Calu3 (cell line): ENCODE measurements at regions of chrX and their contacts with region 1.

Region 1: DNA sequence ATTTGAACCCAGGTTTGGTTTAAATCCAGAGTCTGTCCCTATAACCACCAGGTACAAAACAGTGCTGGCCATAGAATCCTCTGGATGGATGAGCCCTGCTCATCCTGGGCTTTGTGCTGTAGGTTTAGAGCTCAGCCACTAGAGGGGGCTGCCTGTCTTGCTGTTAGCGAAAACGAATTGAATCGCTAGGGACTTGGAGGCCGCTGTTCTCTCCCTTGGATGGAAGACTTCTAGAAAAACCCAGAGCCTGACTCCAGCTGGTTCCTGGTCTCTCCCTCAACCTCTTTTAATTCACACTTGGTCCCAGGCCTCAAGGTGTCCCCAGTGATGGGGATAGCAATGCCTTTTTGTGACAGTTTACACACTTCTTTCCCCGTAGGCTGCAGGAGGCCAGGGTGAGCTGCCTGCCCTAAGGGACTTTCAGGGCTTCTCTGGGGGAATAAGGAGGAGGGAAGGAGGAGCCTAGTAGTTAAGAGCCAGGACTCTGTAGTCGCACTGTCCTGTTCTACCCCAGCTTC is 8.7 kb downstream of the RIPPLY1 start:
- DNase-seq: peak; percentile 75
- H3K4me3 Mint-ChIP-seq: no peak overlapping the region
- H3K27ac Mint-ChIP-seq: no peak overlapping the region
- H3K4me1 Mint-ChIP-seq: peaks cover 46% of the 10 kb centered on the region
- H3K27me3 Mint-ChIP-seq: no peaks in the 10 kb centered on the region
- CTCF ChIP-seq: peak; percentile 74

Region 2: GRCh38 chrX:105781804-105782203 is 1112.6 kb before region 1 on chrX:
- CTCF ChIA-PET with region 1: no interaction called
- intact Hi-C with region 1: no loop called
- DNase-seq: no peak
- H3K4me3 Mint-ChIP-seq: no peak overlapping the region
- H3K27ac Mint-ChIP-seq: no peak overlapping the region
- H3K4me1 Mint-ChIP-seq: no peaks in the 10 kb centered on the region
- H3K27me3 Mint-ChIP-seq: no peaks in the 10 kb centered on the region
- CTCF ChIP-seq: no peak

Region 3: GRCh38 chrX:106170318-106170717 is 724.1 kb before region 1 on chrX:
- CTCF ChIA-PET with region 1: no interaction called
- intact Hi-C with region 1: no loop called
- DNase-seq: peak; percentile 12
- H3K4me3 Mint-ChIP-seq: no peak overlapping the region
- H3K27ac Mint-ChIP-seq: no peak overlapping the region
- H3K4me1 Mint-ChIP-seq: peaks cover 8% of the 10 kb centered on the region
- H3K27me3 Mint-ChIP-seq: peaks cover 15% of the 10 kb centered on the region
- CTCF ChIP-seq: peak; percentile 35

Region 4: GRCh38 chrX:106933041-106933961 is 38.9 kb after region 1 on chrX:
- CTCF ChIA-PET with region 1: interaction called, 9 read pairs
- intact Hi-C with region 1: loop called (anchors 2 kb)
- DNase-seq: peak; percentile 36
- H3K4me3 Mint-ChIP-seq: peak overlapping the region; percentile 39
- H3K27ac Mint-ChIP-seq: peak overlapping the region; percentile 88
- H3K4me1 Mint-ChIP-seq: peaks cover 44% of the 10 kb centered on the region
- H3K27me3 Mint-ChIP-seq: no peaks in the 10 kb centered on the region
- CTCF ChIP-seq: no peak

Region 5: DNA sequence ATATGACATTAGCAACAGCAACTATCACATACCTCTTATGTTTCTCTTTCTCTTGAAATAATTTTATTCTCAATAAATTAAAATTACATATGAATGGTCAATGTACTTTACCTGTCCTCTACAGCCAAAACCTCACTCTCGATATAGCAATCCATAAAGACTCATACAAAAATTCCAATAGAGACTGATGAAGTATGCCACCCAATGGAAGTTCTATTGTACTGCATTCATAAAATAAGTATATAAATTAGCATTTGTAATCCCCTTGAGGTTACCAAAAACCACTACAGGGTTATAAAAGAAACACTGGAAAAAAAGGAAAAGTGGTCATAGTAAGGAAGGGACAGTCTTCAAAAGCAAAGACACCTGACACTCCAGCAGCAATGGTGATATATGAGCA is 58.5 kb after region 1 on chrX:
- CTCF ChIA-PET with region 1: interaction called, 4 read pairs
- intact Hi-C with region 1: loop called (anchors 1 kb)
- DNase-seq: no peak
- H3K4me3 Mint-ChIP-seq: no peak overlapping the region
- H3K27ac Mint-ChIP-seq: no peak overlapping the region
- H3K4me1 Mint-ChIP-seq: peaks cover 40% of the 10 kb centered on the region
- H3K27me3 Mint-ChIP-seq: no peaks in the 10 kb centered on the region
- CTCF ChIP-seq: peak; percentile 20

Region 6: GRCh38 chrX:106959901-106960300 is 65.5 kb after region 1 on chrX:
- CTCF ChIA-PET with region 1: interaction called, 39 read pairs
- intact Hi-C with region 1: no loop called
- DNase-seq: peak; percentile 17
- H3K4me3 Mint-ChIP-seq: no peak overlapping the region
- H3K27ac Mint-ChIP-seq: no peak overlapping the region
- H3K4me1 Mint-ChIP-seq: peaks cover 12% of the 10 kb centered on the region
- H3K27me3 Mint-ChIP-seq: no peaks in the 10 kb centered on the region
- CTCF ChIP-seq: no peak

Region 7: GRCh38 chrX:107448998-107449835 is 554.8 kb after region 1 on chrX and contains the start of gene FRMPD3:
- CTCF ChIA-PET with region 1: no interaction called
- intact Hi-C with region 1: loop called (anchors 10 kb)
- DNase-seq: peak; percentile 49
- H3K4me3 Mint-ChIP-seq: peak within 1 kb of the TSS; percentile 64
- H3K27ac Mint-ChIP-seq: peak within 1 kb of the TSS; percentile 61
- H3K4me1 Mint-ChIP-seq: peaks cover 16% of the 10 kb centered on the region
- H3K27me3 Mint-ChIP-seq: peaks cover 37% of the 10 kb centered on the region
- CTCF ChIP-seq: no peak
- total RNA-seq, gene FRMPD3: 0.99 and 1.0 TPM in 2 replicates